ENCODE measurements at regions of chr11 and their contacts with region 1.

Region 1: GRCh38 chr11:45354976-45355705 is 69.0 kb upstream of the SYT13 start:
- DNase-seq: peak; percentile 86 to 88 (median 87)
- H3K4me3 ChIP-seq: peak overlapping the region; percentile 68 to 80
- H3K4me3 Mint-ChIP-seq: peak overlapping the region; percentile 79 to 90 (median 85)
- H3K27ac ChIP-seq: peak overlapping the region; percentile 55
- H3K27ac Mint-ChIP-seq: peak overlapping the region; percentile 67 to 96 (median 89)
- H3K4me1 ChIP-seq: peaks cover 19% of the 10 kb centered on the region
- H3K4me1 Mint-ChIP-seq: peaks cover 15 to 17% (median 16%) of the 10 kb centered on the region in 4 donors
- H3K27me3 ChIP-seq: no peaks in the 10 kb centered on the region
- H3K27me3 Mint-ChIP-seq: peaks cover 0 to 9% of the 10 kb centered on the region in 2 donors

Region 2: DNA sequence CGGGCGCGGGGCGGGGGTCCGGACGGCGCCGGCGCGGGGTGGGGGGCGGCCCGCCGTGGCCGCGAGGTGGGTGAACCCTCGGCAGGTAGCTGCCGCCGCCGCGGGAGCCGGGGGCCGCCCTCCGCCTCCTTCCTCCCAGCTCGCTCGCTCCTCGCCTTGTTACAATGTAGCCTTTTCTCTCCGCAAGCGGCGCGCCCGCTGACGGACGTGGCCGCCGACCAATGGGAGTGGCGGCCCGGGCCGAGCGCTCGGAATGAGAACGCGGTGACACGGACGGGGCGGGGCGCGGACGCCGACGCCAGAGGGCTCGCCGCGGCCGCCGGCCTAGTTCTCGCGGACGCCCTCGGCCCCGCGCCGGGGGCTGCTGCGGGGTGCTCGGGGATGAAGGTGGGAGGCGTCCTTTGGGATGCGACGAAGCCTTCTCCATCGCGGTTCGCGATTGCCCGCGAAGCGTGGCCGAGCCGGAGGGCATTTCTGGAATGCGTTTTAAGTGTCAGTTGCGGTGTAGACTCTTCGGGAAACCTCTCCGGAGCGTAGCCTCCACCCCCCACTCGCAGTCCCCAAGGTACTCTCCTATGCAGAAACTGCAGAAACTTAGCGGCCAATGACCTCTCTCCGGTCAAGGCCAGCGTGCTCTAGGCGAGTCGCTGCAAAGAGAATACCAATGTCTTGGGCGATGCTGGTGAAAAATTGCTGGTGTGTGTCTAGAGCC is 208.0 kb before region 1 on chr11:
- CTCF ChIA-PET with region 1: no interaction called
- POLR2A ChIA-PET with region 1: no interaction called
- intact Hi-C with region 1: loop called (anchors 1 kb)
- DNase-seq: peak; percentile 92 to 93 (median 92)
- H3K4me3 ChIP-seq: peak overlapping the region; percentile 69 to 72
- H3K4me3 Mint-ChIP-seq: peak overlapping the region; percentile 90 to 94 (median 92)
- H3K27ac ChIP-seq: peak overlapping the region; percentile 68
- H3K27ac Mint-ChIP-seq: peak overlapping the region; percentile 67 to 95 (median 93)
- H3K4me1 ChIP-seq: peaks cover 21% of the 10 kb centered on the region
- H3K4me1 Mint-ChIP-seq: peaks cover 26 to 47% (median 36%) of the 10 kb centered on the region in 4 donors
- H3K27me3 ChIP-seq: peaks cover 9% of the 10 kb centered on the region
- H3K27me3 Mint-ChIP-seq: no peaks in the 10 kb centered on the region

Region 3: GRCh38 chr11:45339729-45340519 is 15.2 kb before region 1 on chr11:
- CTCF ChIA-PET with region 1: interaction called, 13 read pairs
- POLR2A ChIA-PET with region 1: interaction called, 4 read pairs
- intact Hi-C with region 1: loop called (anchors 1 kb)
- DNase-seq: peak; percentile 85 to 91 (median 87)
- H3K4me3 ChIP-seq: peak overlapping the region in 1 of 2 donors; percentile 36
- H3K4me3 Mint-ChIP-seq: peak overlapping the region; percentile 77 to 89 (median 82)
- H3K27ac ChIP-seq: no peak overlapping the region
- H3K27ac Mint-ChIP-seq: peak overlapping the region in 6 of 7 donors; percentile 16 to 87 (median 68)
- H3K4me1 ChIP-seq: peaks cover 13% of the 10 kb centered on the region
- H3K4me1 Mint-ChIP-seq: peaks cover 7 to 16% (median 10%) of the 10 kb centered on the region in 4 donors
- H3K27me3 ChIP-seq: no peaks in the 10 kb centered on the region
- H3K27me3 Mint-ChIP-seq: peaks cover 15% of the 10 kb centered on the region in 2 donors

Region 4: DNA sequence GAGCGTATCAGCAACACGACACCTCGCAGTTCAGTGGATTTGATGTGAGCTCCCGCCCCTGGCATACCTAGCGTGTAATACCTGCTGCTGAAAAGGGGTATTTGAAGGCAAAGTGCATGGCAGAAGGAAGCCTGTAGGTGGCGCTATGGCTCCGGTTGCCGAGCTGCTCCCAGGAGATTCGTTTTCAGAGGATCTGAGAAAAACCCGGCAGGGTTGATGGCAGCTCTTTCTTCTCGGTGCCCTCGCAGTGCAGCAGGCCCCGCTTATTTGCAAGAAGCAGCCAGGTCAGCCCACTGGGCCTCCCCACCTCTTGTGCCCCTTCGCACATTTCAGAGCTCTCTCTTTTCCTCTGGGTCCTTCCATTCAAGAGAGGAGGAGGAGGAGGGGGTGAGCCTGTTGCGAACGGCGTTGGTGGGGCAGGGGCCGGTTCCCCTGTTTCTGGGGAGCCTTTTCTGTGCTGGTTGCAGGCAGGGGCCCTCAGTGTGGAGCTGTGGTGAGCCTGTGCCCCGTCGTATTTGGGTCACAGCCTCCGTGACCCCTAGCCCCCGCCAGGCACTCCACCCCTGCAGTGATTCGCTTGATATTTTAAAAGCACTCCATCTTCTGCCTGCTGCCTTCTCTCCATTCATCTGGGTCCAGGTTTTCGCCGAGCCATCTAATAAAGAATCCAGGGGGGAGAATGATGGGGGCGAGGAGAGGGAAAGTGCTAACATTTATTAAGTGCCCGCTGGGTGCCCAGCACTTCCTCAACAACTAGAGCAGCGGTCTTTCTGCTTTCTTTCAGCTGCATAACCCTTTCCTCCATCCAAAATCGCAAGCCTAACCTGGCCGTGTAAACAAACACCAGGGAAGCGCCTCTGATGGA is 16.3 kb after region 1 on chr11:
- CTCF ChIA-PET with region 1: interaction called, 25 read pairs
- POLR2A ChIA-PET with region 1: interaction called, 3 read pairs
- intact Hi-C with region 1: no loop called
- DNase-seq: peak; percentile 57 to 69 (median 65)
- H3K4me3 ChIP-seq: no peak overlapping the region
- H3K4me3 Mint-ChIP-seq: peak overlapping the region in 3 of 8 donors; percentile 12 to 52 (median 36)
- H3K27ac ChIP-seq: no peak overlapping the region
- H3K27ac Mint-ChIP-seq: peak overlapping the region in 4 of 7 donors; percentile 68 to 78 (median 72)
- H3K4me1 ChIP-seq: peaks cover 35% of the 10 kb centered on the region
- H3K4me1 Mint-ChIP-seq: peaks cover 20 to 52% (median 26%) of the 10 kb centered on the region in 4 donors
- H3K27me3 ChIP-seq: no peaks in the 10 kb centered on the region
- H3K27me3 Mint-ChIP-seq: peaks cover 8 to 11% of the 10 kb centered on the region in 2 donors

Region 5: DNA sequence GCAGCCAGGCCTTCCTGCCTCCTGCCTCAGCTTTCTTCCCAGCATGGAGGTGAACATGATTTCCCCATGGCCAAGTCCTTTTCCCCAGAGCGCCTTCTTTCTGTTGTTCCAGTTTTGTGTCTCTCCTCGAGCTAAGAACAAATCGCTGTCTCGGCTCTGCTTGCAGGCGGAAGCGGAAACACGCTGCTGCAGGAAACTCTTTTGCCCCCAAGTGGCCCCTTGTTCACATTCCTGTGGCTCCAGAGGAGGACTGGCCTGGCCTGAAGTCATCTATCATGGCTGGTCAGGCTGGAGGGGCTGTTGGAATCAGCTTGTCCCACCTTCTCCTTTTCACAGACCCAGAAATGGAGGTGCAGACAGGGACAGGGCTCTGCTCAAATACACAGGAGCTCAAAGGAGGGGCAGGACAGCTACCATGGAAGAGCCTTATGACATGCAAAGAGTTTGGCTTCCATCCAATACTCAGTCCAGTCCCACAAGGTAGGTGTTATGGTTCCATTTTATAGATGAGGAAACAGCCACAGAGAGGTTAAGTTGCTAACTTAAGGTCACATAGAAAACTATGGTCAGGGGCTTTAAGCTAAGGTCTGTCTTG is 113.2 kb after region 1 on chr11:
- CTCF ChIA-PET with region 1: no interaction called
- POLR2A ChIA-PET with region 1: no interaction called
- intact Hi-C with region 1: no loop called
- DNase-seq: no peak
- H3K4me3 ChIP-seq: no peak overlapping the region
- H3K4me3 Mint-ChIP-seq: no peak overlapping the region
- H3K27ac ChIP-seq: no peak overlapping the region
- H3K27ac Mint-ChIP-seq: no peak overlapping the region
- H3K4me1 ChIP-seq: no peaks in the 10 kb centered on the region
- H3K4me1 Mint-ChIP-seq: no peaks in the 10 kb centered on the region
- H3K27me3 ChIP-seq: no peaks in the 10 kb centered on the region
- H3K27me3 Mint-ChIP-seq: peaks cover 0 to 1% of the 10 kb centered on the region in 2 donors

Region 6: GRCh38 chr11:45500451-45500850 is 145.3 kb after region 1 on chr11:
- CTCF ChIA-PET with region 1: no interaction called
- POLR2A ChIA-PET with region 1: no interaction called
- intact Hi-C with region 1: no loop called
- DNase-seq: no peak
- H3K4me3 ChIP-seq: no peak overlapping the region
- H3K4me3 Mint-ChIP-seq: no peak overlapping the region
- H3K27ac ChIP-seq: no peak overlapping the region
- H3K27ac Mint-ChIP-seq: no peak overlapping the region
- H3K4me1 ChIP-seq: no peaks in the 10 kb centered on the region
- H3K4me1 Mint-ChIP-seq: no peaks in the 10 kb centered on the region
- H3K27me3 ChIP-seq: peaks cover 3% of the 10 kb centered on the region
- H3K27me3 Mint-ChIP-seq: peaks cover 9 to 19% of the 10 kb centered on the region in 2 donors

Measured in CD4-positive, alpha-beta memory T cell (primary cell).